Activated CD4-positive, alpha-beta T cell treated with anti-CD3 and anti-CD28 coated beads for 36 hours (primary cell): ENCODE measurements at regions of chr6 and their contacts with region 1.

Region 1: DNA sequence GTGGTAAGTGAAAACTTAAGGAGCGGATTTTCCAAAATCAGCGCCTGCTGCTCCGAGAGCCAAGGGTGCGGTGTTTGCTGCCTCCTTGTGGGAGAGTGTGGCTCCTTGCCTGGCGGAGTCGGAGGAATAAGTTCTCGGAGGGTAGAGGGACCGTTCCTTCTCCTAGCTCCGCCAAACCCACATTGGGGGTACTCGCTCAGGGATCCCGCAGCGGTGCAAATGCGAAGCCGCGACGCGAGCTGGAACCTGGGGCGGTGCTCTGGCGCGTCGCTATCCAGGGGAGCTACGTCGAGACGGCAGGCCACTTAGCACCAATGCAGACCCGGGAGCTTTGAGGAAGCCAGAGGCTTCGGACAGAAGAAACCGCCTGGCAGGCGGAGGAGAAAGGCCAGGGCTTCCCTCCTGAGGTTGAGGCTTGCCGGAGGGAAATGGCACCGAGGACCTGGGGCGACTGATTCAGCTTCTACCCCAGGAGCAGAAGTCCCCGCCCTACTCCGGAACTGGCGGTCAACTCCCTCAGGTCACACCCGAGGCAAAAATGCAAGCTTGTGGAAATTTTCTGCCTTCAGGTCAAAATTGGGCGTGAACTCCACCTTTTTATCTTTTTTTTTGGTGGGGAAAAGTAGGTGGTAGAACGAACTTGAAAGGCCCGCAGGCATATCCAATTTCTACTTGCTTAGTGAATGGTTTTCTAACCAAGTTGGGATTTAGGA is 5.7 kb upstream of the DDX43 start:
- DNase-seq: peak; percentile 73
- ATAC-seq: peak; percentile 86
- H3K4me3 Mint-ChIP-seq: peak overlapping the region; percentile 76
- H3K27ac Mint-ChIP-seq: peak overlapping the region; percentile 51
- H3K4me1 Mint-ChIP-seq: peaks cover 11% of the 10 kb centered on the region
- H3K27me3 Mint-ChIP-seq: no peaks in the 10 kb centered on the region

Region 2: GRCh38 chr6:72832271-72832670 is 556.7 kb before region 1 on chr6:
- CTCF ChIA-PET with region 1: no interaction called
- POLR2A ChIA-PET with region 1: no interaction called
- intact Hi-C with region 1: no loop called
- DNase-seq: no peak
- ATAC-seq: no peak
- H3K4me3 Mint-ChIP-seq: no peak overlapping the region
- H3K27ac Mint-ChIP-seq: no peak overlapping the region
- H3K4me1 Mint-ChIP-seq: peaks cover 5% of the 10 kb centered on the region
- H3K27me3 Mint-ChIP-seq: no peaks in the 10 kb centered on the region

Region 3: GRCh38 chr6:73262671-73263569 is 126.0 kb before region 1 on chr6 and contains the start of gene KHDC1:
- CTCF ChIA-PET with region 1: no interaction called
- POLR2A ChIA-PET with region 1: no interaction called
- intact Hi-C with region 1: loop called in 1 of 2 experiments (anchors 2 kb)
- DNase-seq: peak; percentile 74
- ATAC-seq: peak; percentile 89
- H3K4me3 Mint-ChIP-seq: peak within 1 kb of the TSS; percentile 89
- H3K27ac Mint-ChIP-seq: peak within 1 kb of the TSS; percentile 93
- H3K4me1 Mint-ChIP-seq: peaks cover 26% of the 10 kb centered on the region
- H3K27me3 Mint-ChIP-seq: no peaks in the 10 kb centered on the region
- total RNA-seq, gene KHDC1: 2.8 to 4.2 TPM

Region 4: GRCh38 chr6:73285674-73286283 is 103.2 kb before region 1 on chr6:
- CTCF ChIA-PET with region 1: interaction called, 3 read pairs
- POLR2A ChIA-PET with region 1: no interaction called
- intact Hi-C with region 1: loop called in 1 of 2 experiments (anchors 5 kb)
- DNase-seq: no peak
- ATAC-seq: peak; percentile 33
- H3K4me3 Mint-ChIP-seq: no peak overlapping the region
- H3K27ac Mint-ChIP-seq: no peak overlapping the region
- H3K4me1 Mint-ChIP-seq: no peaks in the 10 kb centered on the region
- H3K27me3 Mint-ChIP-seq: no peaks in the 10 kb centered on the region

Region 5: DNA sequence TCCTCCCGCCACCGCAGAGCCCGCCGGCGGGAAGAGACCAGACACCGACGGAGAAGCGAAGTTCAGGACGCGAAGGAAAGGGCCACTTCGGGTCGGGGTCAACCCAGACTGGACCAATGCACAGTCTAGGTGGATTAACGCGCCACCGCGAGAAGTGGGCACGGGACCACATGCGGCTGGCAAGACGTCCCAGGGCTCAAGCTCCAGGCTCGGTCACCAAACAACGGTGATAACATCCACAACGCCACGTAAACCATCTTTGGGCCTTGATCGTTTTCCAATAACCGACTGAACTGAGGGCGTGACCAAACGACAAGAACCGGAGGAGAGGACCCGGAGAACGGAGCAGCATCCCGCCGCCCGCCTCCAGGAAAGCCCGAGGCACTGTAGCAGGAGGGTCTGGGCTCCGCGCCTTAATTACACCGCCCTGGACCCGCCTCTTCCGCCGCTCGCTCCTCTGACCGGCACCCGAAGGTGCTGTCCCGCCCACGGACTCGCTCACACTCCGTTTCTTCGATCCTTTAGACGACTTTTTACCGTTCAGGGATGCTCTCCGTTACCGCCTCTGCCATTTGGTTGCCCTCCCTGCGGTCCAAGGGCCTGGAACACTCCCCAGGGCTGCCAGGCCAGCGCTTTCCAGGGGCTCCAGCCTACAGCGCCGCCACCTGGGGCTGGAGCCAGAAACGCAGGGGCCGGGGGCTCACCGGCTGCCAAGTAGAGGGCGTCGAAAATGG is 79.0 kb before region 1 on chr6:
- CTCF ChIA-PET with region 1: interaction called, 8 read pairs
- POLR2A ChIA-PET with region 1: interaction called, 4 read pairs
- intact Hi-C with region 1: loop called (anchors 5 kb)
- DNase-seq: peak; percentile 79
- ATAC-seq: peak; percentile 90
- H3K4me3 Mint-ChIP-seq: peak overlapping the region; percentile 90
- H3K27ac Mint-ChIP-seq: peak overlapping the region; percentile 88
- H3K4me1 Mint-ChIP-seq: peaks cover 20% of the 10 kb centered on the region
- H3K27me3 Mint-ChIP-seq: peaks cover 28% of the 10 kb centered on the region

Region 6: DNA sequence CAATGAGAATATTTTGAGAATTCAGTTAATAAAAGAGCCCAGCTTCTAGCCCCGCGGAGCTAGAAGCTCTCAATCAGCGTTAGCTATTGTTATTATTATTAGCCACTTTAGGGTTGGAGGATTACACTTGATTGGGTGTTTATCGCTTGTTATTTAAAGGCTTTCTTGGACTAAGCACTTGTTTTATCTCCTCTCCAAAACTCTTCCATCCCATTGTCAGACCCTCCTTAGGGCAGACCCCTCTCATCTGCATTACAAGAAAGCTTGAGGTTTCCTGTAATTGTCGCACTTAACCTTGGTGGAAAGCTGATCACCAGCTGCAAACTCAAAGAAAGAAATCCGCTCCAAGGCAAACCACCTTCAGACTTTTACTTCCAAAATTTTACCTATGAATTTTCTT is 39.6 kb before region 1 on chr6:
- CTCF ChIA-PET with region 1: no interaction called
- POLR2A ChIA-PET with region 1: no interaction called
- intact Hi-C with region 1: no loop called
- DNase-seq: no peak
- ATAC-seq: no peak
- H3K4me3 Mint-ChIP-seq: no peak overlapping the region
- H3K27ac Mint-ChIP-seq: no peak overlapping the region
- H3K4me1 Mint-ChIP-seq: no peaks in the 10 kb centered on the region
- H3K27me3 Mint-ChIP-seq: peaks cover 11% of the 10 kb centered on the region

Region 7: DNA sequence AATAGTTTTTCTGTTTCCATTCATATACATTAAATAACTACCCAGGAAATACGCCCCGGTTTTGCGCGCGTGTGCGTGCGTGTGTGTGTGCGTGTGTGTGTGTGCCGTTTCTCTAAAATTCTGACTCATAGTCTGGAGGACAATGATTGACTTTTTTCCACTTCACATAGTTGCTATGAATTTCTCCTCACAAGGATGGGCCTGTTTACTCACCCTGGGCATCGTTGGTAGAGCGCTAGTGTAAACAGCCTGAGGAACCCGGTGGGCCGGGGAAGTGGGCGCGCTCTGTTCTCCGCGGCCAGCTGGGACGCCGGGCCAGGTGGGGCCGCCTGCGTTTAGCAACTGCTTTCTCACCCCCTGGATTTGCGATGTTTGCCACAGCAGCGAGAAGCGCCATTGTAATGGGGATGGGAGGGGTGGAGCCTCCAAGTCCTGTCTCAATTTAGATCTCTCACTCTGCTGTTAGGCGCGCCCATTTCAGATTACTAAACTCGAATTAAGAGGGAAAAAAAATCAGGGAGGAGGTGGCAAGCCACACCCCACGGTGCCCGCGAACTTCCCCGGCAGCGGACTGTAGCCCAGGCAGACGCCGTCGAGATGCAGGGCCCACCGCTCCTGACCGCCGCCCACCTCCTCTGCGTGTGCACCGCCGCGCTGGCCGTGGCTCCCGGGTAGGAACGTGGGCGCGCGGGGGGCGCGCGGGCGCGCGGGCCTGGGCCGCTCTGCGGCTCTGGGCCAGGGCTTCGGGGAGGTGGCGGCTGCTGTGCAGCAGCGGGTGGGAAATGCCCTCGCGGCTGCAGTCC is 306.9 kb after region 1 on chr6 and contains the start of gene CD109:
- CTCF ChIA-PET with region 1: no interaction called
- POLR2A ChIA-PET with region 1: no interaction called
- intact Hi-C with region 1: no loop called
- DNase-seq: peak; percentile 88
- ATAC-seq: peak; percentile 86
- H3K4me3 Mint-ChIP-seq: peak within 1 kb of the TSS; percentile 81
- H3K27ac Mint-ChIP-seq: peak within 1 kb of the TSS; percentile 96
- H3K4me1 Mint-ChIP-seq: peaks cover 44% of the 10 kb centered on the region
- H3K27me3 Mint-ChIP-seq: peaks cover 8% of the 10 kb centered on the region
- total RNA-seq, gene CD109: 13.2 to 15.8 TPM